Activated CD8-positive, alpha-beta memory T cell treated with anti-CD3 and anti-CD28 coated beads, Interleukin-2, amount 10 ng/mL, durations not matched to agents 7 days and 5 days (primary cell): ENCODE measurements at regions of chr12 and their contacts with region 1.

Region 1: DNA sequence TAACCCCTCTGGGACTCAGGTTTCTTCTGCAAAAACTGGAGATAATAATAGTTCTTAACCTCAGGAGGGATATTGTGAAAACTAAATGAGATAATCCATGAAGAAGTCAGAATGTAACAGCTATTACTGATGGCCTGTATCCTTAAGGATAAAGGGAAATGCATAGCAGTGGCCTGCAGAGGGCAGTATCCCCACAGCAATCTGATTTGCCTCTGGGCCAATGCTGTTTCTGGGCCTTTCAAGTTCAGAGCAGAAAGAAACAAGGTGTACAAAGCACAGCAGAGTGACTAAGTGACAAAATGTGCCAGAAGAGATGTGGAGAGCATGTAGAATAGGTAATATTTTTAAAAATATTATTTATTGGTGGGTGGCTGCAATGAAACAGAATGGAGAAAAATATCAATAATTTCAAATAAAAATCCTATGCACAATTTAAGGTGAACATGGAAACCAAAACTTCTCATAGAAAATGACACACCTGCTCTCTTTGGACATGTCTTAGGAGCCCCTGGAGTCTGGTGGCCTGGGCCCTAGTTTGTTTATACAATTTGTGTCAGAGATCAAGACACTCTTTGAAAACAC is 90.3 kb downstream of the C12orf75 start:
- DNase-seq: peak; percentile 74
- ATAC-seq: peak; percentile 74
- H3K4me3 Mint-ChIP-seq: no peak overlapping the region
- H3K27ac Mint-ChIP-seq: no peak overlapping the region
- H3K4me1 Mint-ChIP-seq: peaks cover 2% of the 10 kb centered on the region
- H3K27me3 Mint-ChIP-seq: peaks cover 2% of the 10 kb centered on the region

Region 2: GRCh38 chr12:105775343-105775742 is 354.6 kb after region 1 on chr12:
- CTCF ChIA-PET with region 1: no interaction called
- DNase-seq: no peak
- ATAC-seq: no peak
- H3K4me3 Mint-ChIP-seq: no peak overlapping the region
- H3K27ac Mint-ChIP-seq: no peak overlapping the region
- H3K4me1 Mint-ChIP-seq: no peaks in the 10 kb centered on the region
- H3K27me3 Mint-ChIP-seq: no peaks in the 10 kb centered on the region

Region 3: GRCh38 chr12:106136263-106136662 is 715.5 kb after region 1 on chr12:
- CTCF ChIA-PET with region 1: interaction called, 44 read pairs
- DNase-seq: peak; percentile 79
- ATAC-seq: peak; percentile 27
- H3K4me3 Mint-ChIP-seq: no peak overlapping the region
- H3K27ac Mint-ChIP-seq: no peak overlapping the region
- H3K4me1 Mint-ChIP-seq: no peaks in the 10 kb centered on the region
- H3K27me3 Mint-ChIP-seq: peaks cover 64% of the 10 kb centered on the region